ENCODE measurements at regions of chrX and their contacts with region 1.

Region 1: DNA sequence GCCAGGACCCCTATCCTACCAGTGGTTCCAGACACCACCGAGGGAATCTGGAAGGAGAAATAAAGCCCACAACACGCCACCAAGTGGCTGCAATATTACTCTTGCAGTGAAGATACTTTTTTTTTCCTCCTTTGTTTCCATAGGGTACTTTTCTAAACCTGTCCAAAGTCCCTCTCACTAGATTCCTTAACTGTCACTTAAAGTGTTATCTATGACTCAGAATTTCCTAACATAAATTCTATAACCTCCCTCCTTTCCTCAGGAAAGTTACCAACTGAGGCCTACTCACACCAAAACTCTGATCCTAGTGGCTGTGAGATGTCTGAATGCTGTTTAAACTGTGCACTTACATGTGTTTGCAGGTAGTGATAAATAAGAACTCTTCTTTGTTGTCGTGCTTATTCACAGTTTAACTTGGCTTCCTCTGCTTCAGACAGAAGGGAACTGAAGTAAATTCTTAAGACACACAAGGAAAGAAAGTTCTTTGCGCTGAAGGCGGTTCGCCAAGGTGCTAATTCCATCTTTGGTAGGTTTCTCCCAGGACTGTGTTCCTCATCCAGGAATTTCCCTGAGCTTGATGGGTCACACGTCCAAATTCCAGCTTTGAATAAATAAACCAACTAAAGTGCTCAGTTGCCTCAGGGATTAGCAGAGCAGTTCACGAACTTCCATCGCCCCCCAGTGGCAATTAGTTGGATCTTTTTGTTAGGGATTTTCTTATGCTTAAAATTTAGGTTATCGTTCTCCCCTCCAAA is 10.7 kb upstream of the HCCS start:
- DNase-seq: peak; percentile 24
- ATAC-seq: peak; percentile 47 to 61

Region 2: GRCh38 chrX:10722851-10723250 is 377.6 kb before region 1 on chrX:
- intact Hi-C with region 1: loop called in 1 of 2 experiments (anchors 10 kb)
- DNase-seq: peak; percentile 42
- ATAC-seq: peak; percentile 61 to 78

Region 3: DNA sequence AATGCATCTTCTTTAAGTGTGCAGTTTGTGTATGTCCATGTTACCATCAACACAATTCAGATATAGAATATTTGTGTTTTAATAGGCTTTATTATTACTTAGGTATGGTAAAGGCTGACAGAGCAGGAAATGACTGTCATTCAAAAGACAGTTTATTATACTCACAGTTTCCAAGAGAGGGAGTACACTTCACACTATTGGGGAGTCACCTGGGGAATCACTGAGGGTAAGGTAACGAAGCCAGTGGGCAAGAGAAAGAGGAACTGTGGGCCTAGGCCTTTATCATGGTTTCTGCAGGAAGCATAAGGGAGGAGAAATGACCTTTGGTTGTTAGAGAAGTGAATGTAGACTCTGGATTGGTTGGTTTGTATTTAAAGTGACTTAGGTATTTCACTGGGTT is 224.5 kb before region 1 on chrX:
- intact Hi-C with region 1: no loop called
- DNase-seq: no peak
- ATAC-seq: no peak

Region 4: DNA sequence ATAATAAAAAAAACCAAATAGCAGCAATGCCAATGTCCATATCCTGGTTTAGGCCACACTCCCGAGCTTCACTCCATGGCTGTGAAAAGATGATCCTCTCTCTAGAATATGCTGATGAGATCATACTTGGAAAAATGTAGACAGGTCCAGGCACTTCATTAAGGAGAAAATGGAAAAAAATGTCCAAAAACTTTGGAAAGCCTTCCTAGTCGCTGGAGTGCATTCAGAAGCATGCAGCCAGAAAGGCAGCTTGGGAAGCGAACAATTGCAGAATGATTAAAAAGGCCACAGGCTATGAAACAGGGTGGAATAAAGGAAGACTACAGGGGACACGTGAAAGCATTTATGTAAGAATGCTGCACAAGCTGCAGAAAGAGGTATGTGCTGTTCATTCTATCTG is 155.0 kb before region 1 on chrX:
- intact Hi-C with region 1: no loop called
- DNase-seq: no peak
- ATAC-seq: peak in 1 of 2 donors; percentile 56

Measured in left cardiac atrium (tissue), 4 donors.